ENCODE measurements at regions of chr2 and their contacts with region 1.

Region 1: DNA sequence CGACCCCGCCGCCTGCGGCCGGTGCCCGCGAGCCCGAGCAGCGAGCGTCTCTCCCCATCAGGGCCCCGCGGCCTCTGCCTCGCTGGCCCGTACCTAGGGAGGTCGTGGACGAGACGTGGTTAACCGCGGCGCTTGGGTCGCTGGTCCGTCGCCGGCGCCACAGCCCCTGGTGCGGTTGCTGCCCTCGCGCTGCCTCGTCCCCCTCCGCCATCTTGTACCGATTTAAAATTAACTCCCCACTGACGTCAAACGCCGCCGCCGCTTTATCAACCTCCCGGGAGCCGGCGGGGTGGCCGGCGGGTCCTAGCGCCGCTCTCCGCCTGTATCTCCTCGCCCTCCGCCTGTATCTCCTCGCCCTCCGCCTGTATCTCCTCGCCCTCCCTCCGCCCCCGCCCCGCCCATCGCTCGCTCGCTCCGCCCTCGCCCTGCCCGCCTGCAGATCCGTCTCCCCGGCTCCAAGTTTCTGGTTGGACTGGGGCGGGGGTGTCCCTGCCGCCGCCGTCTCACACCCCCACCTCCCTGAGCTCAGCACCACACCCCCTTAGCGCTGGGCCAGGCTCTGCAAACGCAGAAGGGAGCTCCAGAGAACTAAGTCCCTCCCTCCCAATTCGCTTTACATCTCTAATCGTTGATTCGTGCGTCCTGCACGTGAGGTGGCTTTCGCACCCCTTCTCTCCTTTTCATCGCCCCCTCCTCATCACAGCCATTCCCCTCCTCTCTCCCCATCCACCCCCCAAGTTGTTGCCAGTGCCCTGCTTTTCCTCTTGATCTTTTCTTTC is at the start of gene ATL2:
- DNase-seq: peak; percentile 94
- H3K4me3 ChIP-seq: peak within 1 kb of the TSS; percentile 85 to 96 (median 94)
- H3K27ac ChIP-seq: peak within 1 kb of the TSS; percentile 95
- H3K4me1 ChIP-seq: peaks cover 13% of the 10 kb centered on the region
- H3K27me3 ChIP-seq: no peaks in the 10 kb centered on the region
- CTCF ChIP-seq: no peak
- total RNA-seq, gene ATL2: 72.9 to 89.9 TPM

Region 2: GRCh38 chr2:38315707-38316333 is 61.4 kb before region 1 on chr2:
- CTCF ChIA-PET with region 1: no interaction called
- dilution Hi-C with region 1: no loop called
- in situ Hi-C with region 1: no loop called
- intact Hi-C with region 1: loop called (anchors 1 kb)
- DNase-seq: peak; percentile 35
- H3K4me3 ChIP-seq: no peak overlapping the region
- H3K27ac ChIP-seq: no peak overlapping the region
- H3K4me1 ChIP-seq: peaks cover 6% of the 10 kb centered on the region
- H3K27me3 ChIP-seq: no peaks in the 10 kb centered on the region
- CTCF ChIP-seq: peak; percentile 68 to 71

Region 3: GRCh38 chr2:38330754-38331153 is 46.5 kb before region 1 on chr2:
- CTCF ChIA-PET with region 1: no interaction called
- dilution Hi-C with region 1: no loop called
- in situ Hi-C with region 1: no loop called
- intact Hi-C with region 1: no loop called
- DNase-seq: no peak
- H3K4me3 ChIP-seq: no peak overlapping the region
- H3K27ac ChIP-seq: no peak overlapping the region
- H3K4me1 ChIP-seq: no peaks in the 10 kb centered on the region
- H3K27me3 ChIP-seq: no peaks in the 10 kb centered on the region
- CTCF ChIP-seq: no peak

Region 4: GRCh38 chr2:38417745-38418689 is 40.8 kb after region 1 on chr2:
- CTCF ChIA-PET with region 1: interaction called, 3 read pairs
- dilution Hi-C with region 1: no loop called
- in situ Hi-C with region 1: no loop called
- intact Hi-C with region 1: loop called (anchors 2 kb)
- DNase-seq: peak; percentile 81
- H3K4me3 ChIP-seq: no peak overlapping the region
- H3K27ac ChIP-seq: peak overlapping the region; percentile 39
- H3K4me1 ChIP-seq: peaks cover 38% of the 10 kb centered on the region
- H3K27me3 ChIP-seq: no peaks in the 10 kb centered on the region
- CTCF ChIP-seq: no peak

Region 5: DNA sequence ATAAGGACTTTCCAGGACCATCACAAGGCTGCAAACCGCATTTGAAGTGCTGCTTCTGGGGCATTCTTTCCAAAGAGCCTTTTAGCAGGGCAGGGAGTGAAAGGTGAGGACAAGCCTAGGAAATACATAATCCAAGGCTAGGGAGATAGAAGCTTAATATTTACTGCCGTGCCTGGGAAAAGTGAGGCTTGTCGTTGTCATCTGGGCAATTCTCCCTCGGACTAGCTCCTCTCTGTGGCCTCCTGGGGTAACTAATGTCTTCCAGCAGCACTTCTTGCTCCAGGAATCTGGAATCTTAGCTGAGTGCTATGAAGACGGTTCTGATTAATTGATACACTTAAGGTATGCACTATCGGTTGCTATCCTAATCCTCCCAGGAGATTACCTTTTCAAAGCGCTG is 69.2 kb after region 1 on chr2:
- CTCF ChIA-PET with region 1: interaction called, 6 read pairs
- dilution Hi-C with region 1: loop called (anchors 5 kb)
- in situ Hi-C with region 1: no loop called
- intact Hi-C with region 1: loop called (anchors 1 kb)
- DNase-seq: no peak
- H3K4me3 ChIP-seq: peak overlapping the region in 1 of 3 experiments; percentile 28
- H3K27ac ChIP-seq: peak overlapping the region; percentile 51
- H3K4me1 ChIP-seq: peaks cover 63% of the 10 kb centered on the region
- H3K27me3 ChIP-seq: no peaks in the 10 kb centered on the region
- CTCF ChIP-seq: peak in 1 of 2 donors; percentile 42

Region 6: GRCh38 chr2:38508311-38509039 is 131.2 kb after region 1 on chr2:
- CTCF ChIA-PET with region 1: interaction called, 4 read pairs
- dilution Hi-C with region 1: no loop called
- in situ Hi-C with region 1: no loop called
- intact Hi-C with region 1: loop called (anchors 1 kb)
- DNase-seq: peak; percentile 70
- H3K4me3 ChIP-seq: no peak overlapping the region
- H3K27ac ChIP-seq: no peak overlapping the region
- H3K4me1 ChIP-seq: peaks cover 24% of the 10 kb centered on the region
- H3K27me3 ChIP-seq: no peaks in the 10 kb centered on the region
- CTCF ChIP-seq: peak; percentile 68 to 75

Measured in mammary epithelial cell (primary cell).